MCF 10A (cell line): ENCODE measurements at regions of chr19 and their contacts with region 1.

Region 1: DNA sequence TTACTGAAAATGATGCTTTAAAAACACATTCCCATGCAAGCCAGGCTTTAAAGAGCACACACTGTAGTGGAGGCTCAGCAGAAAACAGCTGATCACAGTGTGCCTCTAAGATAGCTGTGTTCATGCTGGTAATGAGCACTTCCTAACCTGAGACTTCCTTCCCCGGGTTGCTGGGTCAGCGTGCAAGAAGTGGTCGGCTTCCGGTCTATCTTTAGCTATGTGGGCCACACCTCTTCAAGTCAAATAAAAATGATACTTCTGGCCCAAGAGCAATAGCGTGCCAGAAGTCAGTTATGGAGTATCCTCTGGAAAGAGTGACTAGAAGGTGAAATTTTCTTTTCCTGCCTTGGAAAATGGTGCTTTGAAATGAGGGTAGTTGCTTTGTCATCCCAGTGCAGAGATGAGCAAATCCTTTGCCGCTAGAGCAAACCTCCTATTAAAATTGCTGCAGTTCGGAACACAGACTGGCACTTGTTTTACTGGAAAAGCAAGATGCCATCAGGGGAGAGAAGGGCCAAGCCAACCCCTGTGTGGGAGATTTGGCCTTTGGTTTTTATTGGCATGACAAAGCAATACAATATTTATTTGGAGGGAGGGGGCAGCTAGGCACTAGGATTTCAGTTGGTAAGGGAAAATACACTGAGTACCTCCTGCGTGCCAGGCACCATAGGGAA is 64.2 kb downstream of the ARHGAP35 start:
- DNase-seq: peak; percentile 22
- H3K4me3 Mint-ChIP-seq: peak overlapping the region; percentile 51
- H3K27ac Mint-ChIP-seq: peak overlapping the region; percentile 70
- H3K4me1 Mint-ChIP-seq: peaks cover 40% of the 10 kb centered on the region
- H3K27me3 Mint-ChIP-seq: no peaks in the 10 kb centered on the region
- CTCF ChIP-seq: no peak

Region 2: DNA sequence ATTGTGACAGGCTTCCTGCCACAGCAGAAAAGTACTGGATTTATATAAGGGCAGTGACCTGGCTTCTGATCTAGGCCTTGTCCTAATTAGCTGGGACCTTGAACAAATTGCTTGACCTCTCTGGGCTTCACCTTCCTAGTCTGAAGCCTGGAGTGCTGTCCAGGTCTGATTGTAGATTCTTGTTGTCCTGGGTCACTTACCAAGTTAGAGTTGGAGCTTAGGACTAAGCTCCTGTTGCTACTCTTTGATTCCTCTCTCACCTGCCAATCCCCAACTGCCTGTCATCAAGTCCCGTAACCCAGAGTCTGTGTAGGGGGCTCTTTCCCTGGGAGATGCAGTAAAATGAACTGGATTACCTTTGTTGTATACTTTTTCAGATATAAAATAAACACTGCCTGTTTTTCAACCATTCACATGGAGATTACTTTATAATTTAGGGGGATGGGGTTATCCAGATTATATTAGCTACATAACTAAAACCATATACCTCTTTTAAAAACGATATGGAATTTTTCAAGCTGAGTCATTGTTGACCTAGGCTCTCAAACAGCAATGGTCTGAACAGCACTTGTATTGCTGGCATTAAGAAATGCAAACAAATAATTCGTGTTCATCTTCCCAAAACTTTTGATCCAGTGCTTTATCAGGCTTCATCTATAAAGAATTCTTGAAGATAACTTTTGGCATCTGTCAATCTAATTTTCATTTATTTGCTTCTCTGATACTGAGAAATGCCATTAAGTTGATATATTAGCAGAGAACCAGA is 58.4 kb before region 1 on chr19:
- CTCF ChIA-PET with region 1: interaction called, 3 read pairs
- POLR2A ChIA-PET with region 1: interaction called, 59 read pairs
- intact Hi-C with region 1: loop called (anchors 2 kb)
- DNase-seq: peak; percentile 46
- H3K4me3 Mint-ChIP-seq: no peak overlapping the region
- H3K27ac Mint-ChIP-seq: peak overlapping the region; percentile 69
- H3K4me1 Mint-ChIP-seq: peaks cover 32% of the 10 kb centered on the region
- H3K27me3 Mint-ChIP-seq: no peaks in the 10 kb centered on the region
- CTCF ChIP-seq: no peak

Region 3: GRCh38 chr19:46896076-46896794 is 28.8 kb before region 1 on chr19:
- CTCF ChIA-PET with region 1: interaction called, 4 read pairs
- POLR2A ChIA-PET with region 1: interaction called, 17 read pairs
- intact Hi-C with region 1: no loop called
- DNase-seq: no peak
- H3K4me3 Mint-ChIP-seq: no peak overlapping the region
- H3K27ac Mint-ChIP-seq: no peak overlapping the region
- H3K4me1 Mint-ChIP-seq: peaks cover 35% of the 10 kb centered on the region
- H3K27me3 Mint-ChIP-seq: no peaks in the 10 kb centered on the region
- CTCF ChIP-seq: no peak

Region 4: GRCh38 chr19:46944918-46945628 is 20.1 kb after region 1 on chr19:
- CTCF ChIA-PET with region 1: interaction called, 3 read pairs
- POLR2A ChIA-PET with region 1: interaction called, 12 read pairs
- intact Hi-C with region 1: no loop called
- DNase-seq: no peak
- H3K4me3 Mint-ChIP-seq: no peak overlapping the region
- H3K27ac Mint-ChIP-seq: no peak overlapping the region
- H3K4me1 Mint-ChIP-seq: peaks cover under 1% of the 10 kb centered on the region
- H3K27me3 Mint-ChIP-seq: no peaks in the 10 kb centered on the region
- CTCF ChIP-seq: no peak